ENCODE measurements at regions of chr14 and their contacts with region 1.

Region 1: DNA sequence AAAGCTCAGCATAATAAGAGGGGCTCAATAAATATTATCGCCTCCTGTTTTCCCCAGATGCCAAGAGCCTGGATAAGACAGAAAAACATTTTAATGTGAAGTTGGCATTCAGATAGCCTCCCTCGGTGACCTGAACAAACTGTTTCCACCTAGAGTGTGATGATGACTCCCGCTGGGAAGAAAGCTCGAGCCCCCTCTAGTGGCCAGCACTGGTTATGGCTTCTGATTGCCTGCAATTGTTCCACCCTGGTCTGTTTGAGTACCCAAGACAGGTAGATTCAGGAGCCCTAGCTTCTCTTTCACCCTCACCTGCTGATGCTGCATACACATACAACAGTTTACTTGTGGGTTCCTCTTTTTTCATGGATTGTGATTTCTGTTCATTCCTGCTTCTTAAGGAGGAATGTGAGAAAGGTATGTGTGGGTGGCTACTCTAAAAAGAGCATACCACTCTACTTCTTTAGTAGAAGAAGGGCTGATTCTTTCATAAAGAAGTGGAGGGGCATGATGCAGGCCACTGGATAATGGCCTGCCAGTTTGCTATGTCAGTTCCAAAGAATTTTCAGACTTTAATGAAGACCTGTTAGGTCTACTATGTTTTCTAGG is 6.4 kb downstream of the ERG28 start:
- DNase-seq: peak; percentile 87
- H3K4me3 ChIP-seq: no peak overlapping the region
- H3K27ac ChIP-seq: no peak overlapping the region
- H3K4me1 ChIP-seq: no peaks in the 10 kb centered on the region
- H3K27me3 ChIP-seq: no peaks in the 10 kb centered on the region
- CTCF ChIP-seq: peak; percentile 96

Region 2: DNA sequence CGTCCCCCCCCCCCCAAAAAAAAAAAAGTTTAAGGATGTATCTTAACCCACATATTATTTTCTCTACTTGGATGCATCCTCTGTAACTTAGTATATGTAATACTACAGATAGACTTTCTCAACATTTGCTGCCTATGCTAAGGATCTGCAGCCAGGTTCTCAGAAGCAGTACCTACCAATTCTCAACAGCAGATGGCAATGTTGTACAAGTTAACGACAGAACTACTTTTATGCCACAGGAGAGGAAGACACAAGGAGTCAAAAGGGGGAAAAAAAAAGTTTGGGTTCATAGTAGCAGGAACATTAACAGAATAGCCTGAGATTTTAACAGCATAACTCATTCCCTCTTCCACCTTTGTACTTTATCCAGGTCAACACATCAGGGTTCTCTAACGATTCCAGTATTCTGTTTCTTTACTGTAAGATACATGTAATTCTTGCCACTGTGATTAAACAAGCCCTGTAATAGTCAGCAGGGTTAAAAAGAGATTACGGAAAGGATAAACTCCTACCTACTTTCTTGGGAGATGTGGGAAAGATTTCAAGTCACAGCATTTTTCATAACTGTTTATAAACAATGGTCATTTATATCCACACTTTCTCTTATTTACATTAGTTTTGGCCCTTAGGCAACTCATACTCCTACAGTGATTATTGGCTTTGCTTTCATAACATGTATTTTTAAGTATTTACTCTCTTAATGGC is 521.7 kb before region 1 on chr14:
- intact Hi-C with region 1: loop called (anchors 5 kb)
- DNase-seq: peak; percentile 78
- H3K4me3 ChIP-seq: no peak overlapping the region
- H3K27ac ChIP-seq: peak overlapping the region; percentile 28
- H3K4me1 ChIP-seq: no peaks in the 10 kb centered on the region
- H3K27me3 ChIP-seq: no peaks in the 10 kb centered on the region
- CTCF ChIP-seq: peak; percentile 65

Region 3: DNA sequence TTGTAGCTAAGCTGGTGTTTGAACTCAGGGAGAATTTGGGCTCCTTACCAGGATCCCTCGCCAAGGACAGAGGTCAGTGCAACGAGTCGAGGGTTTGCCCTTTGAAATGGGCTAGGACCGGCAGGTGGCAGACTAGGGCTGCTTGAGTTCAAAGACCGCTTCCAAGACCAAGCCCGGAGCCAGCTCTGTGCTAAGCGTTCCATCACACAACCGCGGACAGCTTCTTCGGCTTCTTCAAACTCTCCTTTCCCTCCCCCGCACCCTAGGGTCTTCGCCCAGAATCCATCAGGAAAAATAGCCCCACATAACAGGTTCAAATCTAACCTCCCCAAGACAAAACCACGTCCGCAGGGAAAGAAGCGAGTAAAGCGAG is 76.5 kb before region 1 on chr14:
- intact Hi-C with region 1: loop called (anchors 2 kb)
- DNase-seq: peak; percentile 91
- H3K4me3 ChIP-seq: peak overlapping the region; percentile 57
- H3K27ac ChIP-seq: peak overlapping the region; percentile 83
- H3K4me1 ChIP-seq: peaks cover 12% of the 10 kb centered on the region
- H3K27me3 ChIP-seq: no peaks in the 10 kb centered on the region
- CTCF ChIP-seq: peak; percentile 64

Region 4: DNA sequence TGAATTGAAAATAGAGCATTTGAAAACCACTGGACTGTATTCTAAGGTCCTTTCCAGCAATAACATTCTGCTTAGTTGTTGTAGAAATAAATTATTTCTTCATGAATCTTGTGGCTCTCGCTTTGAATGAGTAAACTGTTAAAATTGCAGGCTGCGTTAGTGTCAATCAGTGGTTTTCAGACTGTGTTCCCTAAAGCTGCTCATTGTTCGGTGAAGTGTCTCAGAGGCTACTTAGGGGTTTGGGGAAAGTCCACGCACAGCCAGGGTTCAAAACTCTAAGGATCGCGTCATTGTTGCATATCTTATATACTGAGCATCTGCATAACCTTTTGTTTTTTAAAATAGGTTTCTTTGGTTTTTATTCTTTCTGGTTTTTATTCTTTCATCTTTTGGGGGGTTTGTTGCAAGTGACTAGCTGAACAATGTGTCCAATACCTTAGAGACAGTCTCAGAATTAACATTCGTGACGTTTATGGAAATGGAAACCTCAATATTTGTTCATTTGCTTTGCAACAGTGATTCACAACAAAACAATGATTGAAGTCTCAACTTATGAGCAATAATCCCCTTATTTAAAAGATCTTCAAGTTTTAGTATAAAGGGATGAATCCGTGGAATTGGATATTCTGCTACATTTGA is 114.9 kb after region 1 on chr14:
- intact Hi-C with region 1: no loop called
- DNase-seq: no peak
- H3K4me3 ChIP-seq: no peak overlapping the region
- H3K27ac ChIP-seq: no peak overlapping the region
- H3K4me1 ChIP-seq: no peaks in the 10 kb centered on the region
- H3K27me3 ChIP-seq: no peaks in the 10 kb centered on the region
- CTCF ChIP-seq: no peak

Measured in colonic mucosa (tissue), 4 donors.